Naive thymus-derived CD4-positive, alpha-beta T cell (primary cell): ENCODE measurements at regions of chr15 and their contacts with region 1.

Region 1: GRCh38 chr15:51737280-51738017 is at the start of gene LYSMD2:
- DNase-seq: peak; percentile 56 to 78 (median 66)
- ATAC-seq: peak; percentile 73
- H3K4me3 ChIP-seq: peak within 1 kb of the TSS; percentile 71
- H3K4me3 Mint-ChIP-seq: peak within 1 kb of the TSS; percentile 87 to 96 (median 94)
- H3K27ac ChIP-seq: peak within 1 kb of the TSS; percentile 84
- H3K27ac Mint-ChIP-seq: peak within 1 kb of the TSS; percentile 86 to 98 (median 96)
- H3K4me1 ChIP-seq: peaks cover 28 to 34% of the 10 kb centered on the region in 2 donors
- H3K4me1 Mint-ChIP-seq: peaks cover 47 to 71% (median 63%) of the 10 kb centered on the region in 7 donors
- H3K27me3 ChIP-seq: no peaks in the 10 kb centered on the region
- H3K27me3 Mint-ChIP-seq: no peaks in the 10 kb centered on the region
- total RNA-seq, gene LYSMD2: 12.5 to 33.8 (median 17.8) TPM

Region 2: GRCh38 chr15:51622604-51623370 is 114.7 kb before region 1 on chr15 and contains the start of gene DMXL2:
- CTCF ChIA-PET with region 1: interaction called, 3 read pairs
- POLR2A ChIA-PET with region 1: no interaction called
- intact Hi-C with region 1: loop called in 1 of 2 experiments (anchors 10 kb)
- DNase-seq: peak; percentile 44 to 75 (median 72)
- ATAC-seq: peak; percentile 76
- H3K4me3 ChIP-seq: peak within 1 kb of the TSS; percentile 58
- H3K4me3 Mint-ChIP-seq: peak within 1 kb of the TSS; percentile 79 to 92 (median 88)
- H3K27ac ChIP-seq: peak within 1 kb of the TSS; percentile 55
- H3K27ac Mint-ChIP-seq: peak within 1 kb of the TSS; percentile 26 to 89 (median 68)
- H3K4me1 ChIP-seq: peaks cover 0 to 3% of the 10 kb centered on the region in 2 donors
- H3K4me1 Mint-ChIP-seq: peaks cover 14 to 29% (median 19%) of the 10 kb centered on the region in 7 donors
- H3K27me3 ChIP-seq: no peaks in the 10 kb centered on the region
- H3K27me3 Mint-ChIP-seq: peaks cover 8 to 56% (median 10%) of the 10 kb centered on the region in 5 donors
- total RNA-seq, gene DMXL2: 6.4 to 58.3 (median 7.2) TPM

Region 3: GRCh38 chr15:51688863-51689262 is 48.6 kb before region 1 on chr15:
- CTCF ChIA-PET with region 1: no interaction called
- POLR2A ChIA-PET with region 1: interaction called, 4 read pairs
- intact Hi-C with region 1: loop called (anchors 1 to 5 kb)
- DNase-seq: no peak
- ATAC-seq: no peak
- H3K4me3 ChIP-seq: no peak overlapping the region
- H3K4me3 Mint-ChIP-seq: no peak overlapping the region
- H3K27ac ChIP-seq: no peak overlapping the region
- H3K27ac Mint-ChIP-seq: no peak overlapping the region
- H3K4me1 ChIP-seq: peaks cover 0 to 11% of the 10 kb centered on the region in 2 donors
- H3K4me1 Mint-ChIP-seq: peaks cover 9 to 27% (median 20%) of the 10 kb centered on the region in 7 donors
- H3K27me3 ChIP-seq: no peaks in the 10 kb centered on the region
- H3K27me3 Mint-ChIP-seq: peaks cover 26 to 81% (median 31%) of the 10 kb centered on the region in 5 donors

Region 4: GRCh38 chr15:51756482-51756881 is 19.0 kb after region 1 on chr15:
- CTCF ChIA-PET with region 1: interaction called, 5 read pairs
- POLR2A ChIA-PET with region 1: interaction called, 44 read pairs
- intact Hi-C with region 1: loop called (anchors 1 to 2 kb)
- DNase-seq: no peak
- ATAC-seq: peak; percentile 44
- H3K4me3 ChIP-seq: no peak overlapping the region
- H3K4me3 Mint-ChIP-seq: no peak overlapping the region
- H3K27ac ChIP-seq: no peak overlapping the region
- H3K27ac Mint-ChIP-seq: no peak overlapping the region
- H3K4me1 ChIP-seq: peaks cover 0 to 10% of the 10 kb centered on the region in 2 donors
- H3K4me1 Mint-ChIP-seq: peaks cover 19 to 49% (median 38%) of the 10 kb centered on the region in 7 donors
- H3K27me3 ChIP-seq: no peaks in the 10 kb centered on the region
- H3K27me3 Mint-ChIP-seq: peaks cover 0 to 30% (median 0%) of the 10 kb centered on the region in 5 donors

Region 5: DNA sequence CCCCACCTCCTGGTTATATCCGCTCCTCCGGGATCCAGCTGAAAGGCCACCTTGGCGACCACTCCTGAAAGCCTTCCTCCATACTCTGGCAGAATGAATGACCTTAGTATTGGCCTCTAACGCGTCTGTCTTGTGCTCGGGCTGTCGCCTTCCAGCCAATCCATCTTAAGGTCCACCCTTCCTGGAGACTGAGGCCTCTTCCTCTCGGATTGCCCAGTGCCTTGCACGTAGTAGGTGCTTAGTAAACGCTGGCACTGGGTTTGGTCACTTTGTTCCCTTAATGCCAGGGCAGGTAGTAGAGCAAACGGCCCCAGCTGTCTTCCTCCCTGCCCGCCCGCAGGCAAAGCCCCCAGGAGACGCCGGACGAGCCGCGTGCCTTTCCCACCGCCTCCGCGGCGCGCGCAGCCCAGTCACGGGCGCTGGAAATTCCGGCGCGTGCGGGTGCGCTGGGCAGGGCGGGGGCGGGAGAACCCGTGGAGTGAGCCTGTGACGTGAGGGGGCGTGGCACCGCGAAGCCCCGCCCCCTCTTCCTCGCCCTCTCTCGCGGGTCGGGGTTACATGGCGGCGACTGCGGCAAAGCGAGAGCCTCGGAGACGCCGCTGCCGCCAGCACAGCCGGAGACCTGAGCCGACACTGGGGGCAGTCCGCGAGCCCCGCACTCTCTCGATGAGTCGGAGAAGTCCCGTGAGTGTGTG is 281.4 kb after region 1 on chr15 and contains the start of gene MAPK6:
- CTCF ChIA-PET with region 1: no interaction called
- POLR2A ChIA-PET with region 1: interaction called, 3 read pairs
- intact Hi-C with region 1: loop called in 1 of 2 experiments (anchors 10 kb)
- DNase-seq: peak; percentile 91 to 96 (median 94)
- ATAC-seq: peak; percentile 95
- H3K4me3 ChIP-seq: peak within 1 kb of the TSS; percentile 79
- H3K4me3 Mint-ChIP-seq: peak within 1 kb of the TSS; percentile 90 to 99 (median 96)
- H3K27ac ChIP-seq: peak within 1 kb of the TSS; percentile 88
- H3K27ac Mint-ChIP-seq: peak within 1 kb of the TSS; percentile 88 to 100 (median 98)
- H3K4me1 ChIP-seq: peaks cover 9 to 29% of the 10 kb centered on the region in 2 donors
- H3K4me1 Mint-ChIP-seq: peaks cover 32 to 50% (median 39%) of the 10 kb centered on the region in 7 donors
- H3K27me3 ChIP-seq: no peaks in the 10 kb centered on the region
- H3K27me3 Mint-ChIP-seq: peaks cover 0 to 15% (median 0%) of the 10 kb centered on the region in 5 donors
- total RNA-seq, gene MAPK6: 19.2 to 44.1 (median 25.3) TPM

Region 6: GRCh38 chr15:52481915-52482314 is 744.5 kb after region 1 on chr15:
- CTCF ChIA-PET with region 1: no interaction called
- POLR2A ChIA-PET with region 1: no interaction called
- intact Hi-C with region 1: loop called in 1 of 2 experiments (anchors 10 kb)
- DNase-seq: peak in 7 of 9 donors; percentile 75 to 91 (median 87)
- ATAC-seq: peak; percentile 99
- H3K4me3 ChIP-seq: peak overlapping the region; percentile 36
- H3K4me3 Mint-ChIP-seq: peak overlapping the region; percentile 8 to 78 (median 58)
- H3K27ac ChIP-seq: no peak overlapping the region
- H3K27ac Mint-ChIP-seq: peak overlapping the region; percentile 15 to 88 (median 53)
- H3K4me1 ChIP-seq: peaks cover 30 to 43% of the 10 kb centered on the region in 2 donors
- H3K4me1 Mint-ChIP-seq: peaks cover 56 to 71% (median 59%) of the 10 kb centered on the region in 7 donors
- H3K27me3 ChIP-seq: no peaks in the 10 kb centered on the region
- H3K27me3 Mint-ChIP-seq: no peaks in the 10 kb centered on the region